Breast epithelium (tissue), 4 donors: ENCODE measurements at regions of chr4 and their contacts with region 1.

Region 1: GRCh38 chr4:86957214-86957613 is 22.4 kb downstream of the AFF1 start:
- DNase-seq: no peak
- H3K4me3 ChIP-seq: no peak overlapping the region
- H3K27ac ChIP-seq: no peak overlapping the region
- H3K4me1 ChIP-seq: no peaks in the 10 kb centered on the region
- H3K27me3 ChIP-seq: no peaks in the 10 kb centered on the region
- CTCF ChIP-seq: no peak
- POLR2A ChIP-seq: no peak

Region 2: GRCh38 chr4:86967798-86968197 is 10.6 kb after region 1 on chr4:
- intact Hi-C with region 1: loop called (anchors 1 kb)
- DNase-seq: no peak
- H3K4me3 ChIP-seq: no peak overlapping the region
- H3K27ac ChIP-seq: no peak overlapping the region
- H3K4me1 ChIP-seq: peaks cover 0 to 5% of the 10 kb centered on the region in 2 donors
- H3K27me3 ChIP-seq: no peaks in the 10 kb centered on the region
- CTCF ChIP-seq: no peak
- POLR2A ChIP-seq: no peak

Region 3: GRCh38 chr4:87012265-87012953 is 55.2 kb after region 1 on chr4:
- intact Hi-C with region 1: no loop called
- DNase-seq: no peak
- H3K4me3 ChIP-seq: no peak overlapping the region
- H3K27ac ChIP-seq: peak overlapping the region; percentile 39 to 64
- H3K4me1 ChIP-seq: peaks cover 0 to 10% of the 10 kb centered on the region in 2 donors
- H3K27me3 ChIP-seq: no peaks in the 10 kb centered on the region
- CTCF ChIP-seq: no peak
- POLR2A ChIP-seq: no peak